CD8-positive, alpha-beta T cell (primary cell): ENCODE measurements at regions of chr20 and their contacts with region 1.

Region 1: GRCh38 chr20:18412221-18412901 is 54.5 kb downstream of the DZANK1 start:
- DNase-seq: no peak
- ATAC-seq: no peak
- H3K4me3 ChIP-seq: no peak overlapping the region
- H3K4me3 Mint-ChIP-seq: no peak overlapping the region
- H3K27ac ChIP-seq: no peak overlapping the region
- H3K27ac Mint-ChIP-seq: no peak overlapping the region
- H3K4me1 ChIP-seq: no peaks in the 10 kb centered on the region
- H3K4me1 Mint-ChIP-seq: peaks cover 3% of the 10 kb centered on the region
- H3K27me3 ChIP-seq: no peaks in the 10 kb centered on the region
- H3K27me3 Mint-ChIP-seq: no peaks in the 10 kb centered on the region
- CTCF ChIP-seq: no peak

Region 2: GRCh38 chr20:18427214-18427613 is 14.9 kb after region 1 on chr20:
- CTCF ChIA-PET with region 1: no interaction called
- POLR2A ChIA-PET with region 1: no interaction called
- intact Hi-C with region 1: no loop called
- DNase-seq: no peak
- ATAC-seq: no peak
- H3K4me3 ChIP-seq: no peak overlapping the region
- H3K4me3 Mint-ChIP-seq: no peak overlapping the region
- H3K27ac ChIP-seq: no peak overlapping the region
- H3K27ac Mint-ChIP-seq: no peak overlapping the region
- H3K4me1 ChIP-seq: no peaks in the 10 kb centered on the region
- H3K4me1 Mint-ChIP-seq: no peaks in the 10 kb centered on the region
- H3K27me3 ChIP-seq: no peaks in the 10 kb centered on the region
- H3K27me3 Mint-ChIP-seq: no peaks in the 10 kb centered on the region
- CTCF ChIP-seq: no peak

Region 3: DNA sequence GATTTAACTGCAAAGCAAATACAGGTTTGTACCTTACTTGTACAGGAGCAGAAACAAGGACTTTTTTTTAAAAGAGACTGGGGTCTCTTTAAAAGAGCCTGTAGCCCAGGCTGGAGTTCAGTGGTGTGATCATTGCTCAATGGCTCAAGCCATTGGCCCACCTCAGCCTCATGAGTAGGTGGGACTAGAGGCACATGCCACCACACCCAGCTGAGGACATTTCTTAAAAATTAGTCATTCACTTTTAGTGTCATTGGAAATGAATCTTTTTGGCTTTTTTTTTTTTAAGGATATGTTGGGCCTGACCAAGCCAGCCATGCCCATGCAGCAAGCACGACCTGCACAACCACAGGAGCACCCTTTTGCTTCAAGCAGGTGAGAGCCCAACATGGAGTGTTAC is 112.3 kb after region 1 on chr20:
- CTCF ChIA-PET with region 1: no interaction called
- POLR2A ChIA-PET with region 1: no interaction called
- intact Hi-C with region 1: loop called in 1 of 2 experiments (anchors 5 kb)
- DNase-seq: no peak
- ATAC-seq: no peak
- H3K4me3 ChIP-seq: no peak overlapping the region
- H3K4me3 Mint-ChIP-seq: no peak overlapping the region
- H3K27ac ChIP-seq: no peak overlapping the region
- H3K27ac Mint-ChIP-seq: no peak overlapping the region
- H3K4me1 ChIP-seq: no peaks in the 10 kb centered on the region
- H3K4me1 Mint-ChIP-seq: no peaks in the 10 kb centered on the region
- H3K27me3 ChIP-seq: no peaks in the 10 kb centered on the region
- H3K27me3 Mint-ChIP-seq: no peaks in the 10 kb centered on the region
- CTCF ChIP-seq: no peak

Region 4: DNA sequence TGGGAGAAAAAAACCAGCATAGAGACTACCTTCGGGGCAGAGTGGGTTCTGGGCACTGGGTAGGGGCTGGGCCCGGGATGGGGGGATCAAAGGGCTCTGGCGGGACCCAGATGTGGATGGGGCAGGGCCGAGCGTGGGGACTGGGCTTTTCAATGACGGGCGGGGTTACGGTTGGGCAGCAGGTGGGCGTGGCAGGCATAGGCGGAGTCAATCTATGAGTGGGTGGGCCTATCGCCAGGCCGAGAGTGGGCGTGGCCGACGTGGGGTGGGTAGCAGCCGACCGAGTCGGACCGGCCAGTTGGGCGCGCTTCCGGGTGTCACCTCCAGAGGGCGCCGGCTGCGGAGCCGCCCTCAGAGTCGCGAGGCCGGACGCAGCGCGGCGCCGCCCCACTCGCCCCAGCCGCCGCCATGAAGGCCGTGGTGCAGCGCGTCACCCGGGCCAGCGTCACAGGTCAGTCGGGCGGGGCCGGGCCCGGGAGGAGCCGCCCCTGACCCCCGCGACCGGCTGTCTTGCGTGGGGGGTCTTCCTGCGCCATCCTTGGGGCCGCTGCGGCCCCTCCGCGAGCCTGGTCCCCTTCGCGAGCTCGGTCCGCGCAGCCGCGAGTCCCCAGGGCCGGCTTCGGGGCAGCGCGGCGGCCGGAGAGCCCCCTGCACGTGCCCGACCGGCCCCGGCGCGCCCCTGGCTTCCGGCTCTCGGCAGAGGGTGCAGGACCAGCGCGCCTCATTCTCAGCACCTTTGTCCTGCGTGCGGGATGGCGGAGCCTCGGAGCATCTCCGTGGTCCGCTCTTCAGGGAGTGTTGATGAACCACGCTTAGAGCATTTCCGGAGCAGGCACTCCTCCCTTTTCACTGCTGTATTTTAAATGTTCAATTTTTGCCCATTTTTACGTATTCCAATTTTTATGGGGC is 175.6 kb after region 1 on chr20 and contains the start of gene DTD1:
- CTCF ChIA-PET with region 1: no interaction called
- POLR2A ChIA-PET with region 1: no interaction called
- intact Hi-C with region 1: loop called in 1 of 2 experiments (anchors 10 kb)
- DNase-seq: peak; percentile 53 to 89 (median 82)
- ATAC-seq: peak; percentile 82
- H3K4me3 ChIP-seq: peak within 1 kb of the TSS; percentile 65 to 83
- H3K4me3 Mint-ChIP-seq: peak within 1 kb of the TSS; percentile 95
- H3K27ac ChIP-seq: peak within 1 kb of the TSS; percentile 56 to 83
- H3K27ac Mint-ChIP-seq: peak within 1 kb of the TSS; percentile 94
- H3K4me1 ChIP-seq: peaks cover 18% of the 10 kb centered on the region
- H3K4me1 Mint-ChIP-seq: peaks cover 32% of the 10 kb centered on the region
- H3K27me3 ChIP-seq: no peaks in the 10 kb centered on the region
- H3K27me3 Mint-ChIP-seq: peaks cover 6% of the 10 kb centered on the region
- CTCF ChIP-seq: peak; percentile 45
- total RNA-seq, gene DTD1: 12.5 to 14.5 TPM

Region 5: DNA sequence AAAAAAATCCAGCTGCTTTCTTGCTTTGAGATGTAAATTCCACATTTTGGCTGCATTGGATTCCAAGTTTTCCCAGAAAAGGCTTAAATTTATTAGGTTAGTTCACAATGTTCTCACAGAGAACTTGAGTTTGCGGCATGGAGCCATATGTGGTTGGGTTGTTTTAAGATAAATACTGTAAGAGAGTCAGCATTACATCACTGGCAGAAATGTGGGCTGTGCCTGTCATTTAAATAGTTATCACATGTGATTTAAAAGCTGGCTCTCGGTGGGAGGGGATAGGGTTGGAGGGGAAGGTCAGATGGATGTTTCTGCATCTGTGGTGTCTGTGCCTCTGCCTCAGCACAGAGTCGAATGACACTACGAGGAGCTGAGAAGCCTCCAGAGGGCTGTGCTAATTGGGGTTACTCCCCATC is 327.4 kb after region 1 on chr20:
- CTCF ChIA-PET with region 1: no interaction called
- POLR2A ChIA-PET with region 1: no interaction called
- intact Hi-C with region 1: no loop called
- DNase-seq: peak in 1 of 9 experiments; percentile 37
- ATAC-seq: no peak
- H3K4me3 ChIP-seq: no peak overlapping the region
- H3K4me3 Mint-ChIP-seq: no peak overlapping the region
- H3K27ac ChIP-seq: no peak overlapping the region
- H3K27ac Mint-ChIP-seq: peak overlapping the region; percentile 32
- H3K4me1 ChIP-seq: peaks cover 5% of the 10 kb centered on the region
- H3K4me1 Mint-ChIP-seq: peaks cover 29% of the 10 kb centered on the region
- H3K27me3 ChIP-seq: no peaks in the 10 kb centered on the region
- H3K27me3 Mint-ChIP-seq: no peaks in the 10 kb centered on the region
- CTCF ChIP-seq: no peak

Region 6: DNA sequence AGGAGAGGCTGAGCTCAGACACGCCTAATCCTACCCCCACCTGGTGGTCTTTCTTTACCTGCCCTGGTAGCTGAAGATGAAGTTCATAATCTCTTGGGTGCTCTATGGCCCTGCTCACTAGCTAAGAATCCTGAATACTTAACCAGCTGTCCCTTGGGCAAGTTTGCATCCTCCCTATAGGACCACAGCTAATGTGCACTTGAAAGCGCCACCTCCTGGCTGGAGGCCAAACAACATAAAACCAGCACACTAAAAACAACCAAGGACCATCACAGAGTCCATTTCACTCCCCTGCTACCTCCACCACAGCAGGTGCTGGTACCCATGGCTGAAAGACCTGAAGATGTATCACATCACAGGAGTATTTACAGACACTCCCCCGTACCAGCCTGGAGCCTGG is 644.5 kb after region 1 on chr20:
- CTCF ChIA-PET with region 1: no interaction called
- POLR2A ChIA-PET with region 1: no interaction called
- intact Hi-C with region 1: loop called in 1 of 2 experiments (anchors 2 kb)
- DNase-seq: peak in 1 of 9 experiments; percentile 8
- ATAC-seq: no peak
- H3K4me3 ChIP-seq: no peak overlapping the region
- H3K4me3 Mint-ChIP-seq: no peak overlapping the region
- H3K27ac ChIP-seq: no peak overlapping the region
- H3K27ac Mint-ChIP-seq: no peak overlapping the region
- H3K4me1 ChIP-seq: no peaks in the 10 kb centered on the region
- H3K4me1 Mint-ChIP-seq: no peaks in the 10 kb centered on the region
- H3K27me3 ChIP-seq: no peaks in the 10 kb centered on the region
- H3K27me3 Mint-ChIP-seq: peaks cover 7% of the 10 kb centered on the region
- CTCF ChIP-seq: no peak

Region 7: GRCh38 chr20:19661717-19662636 is 1249.6 kb after region 1 on chr20:
- CTCF ChIA-PET with region 1: interaction called, 3 read pairs
- POLR2A ChIA-PET with region 1: no interaction called
- intact Hi-C with region 1: loop called (anchors 2 to 5 kb)
- DNase-seq: peak in 6 of 9 experiments; percentile 8 to 59 (median 48)
- ATAC-seq: no peak
- H3K4me3 ChIP-seq: no peak overlapping the region
- H3K4me3 Mint-ChIP-seq: no peak overlapping the region
- H3K27ac ChIP-seq: no peak overlapping the region
- H3K27ac Mint-ChIP-seq: no peak overlapping the region
- H3K4me1 ChIP-seq: no peaks in the 10 kb centered on the region
- H3K4me1 Mint-ChIP-seq: no peaks in the 10 kb centered on the region
- H3K27me3 ChIP-seq: no peaks in the 10 kb centered on the region
- H3K27me3 Mint-ChIP-seq: peaks cover 26% of the 10 kb centered on the region
- CTCF ChIP-seq: peak; percentile 92

Region 8: DNA sequence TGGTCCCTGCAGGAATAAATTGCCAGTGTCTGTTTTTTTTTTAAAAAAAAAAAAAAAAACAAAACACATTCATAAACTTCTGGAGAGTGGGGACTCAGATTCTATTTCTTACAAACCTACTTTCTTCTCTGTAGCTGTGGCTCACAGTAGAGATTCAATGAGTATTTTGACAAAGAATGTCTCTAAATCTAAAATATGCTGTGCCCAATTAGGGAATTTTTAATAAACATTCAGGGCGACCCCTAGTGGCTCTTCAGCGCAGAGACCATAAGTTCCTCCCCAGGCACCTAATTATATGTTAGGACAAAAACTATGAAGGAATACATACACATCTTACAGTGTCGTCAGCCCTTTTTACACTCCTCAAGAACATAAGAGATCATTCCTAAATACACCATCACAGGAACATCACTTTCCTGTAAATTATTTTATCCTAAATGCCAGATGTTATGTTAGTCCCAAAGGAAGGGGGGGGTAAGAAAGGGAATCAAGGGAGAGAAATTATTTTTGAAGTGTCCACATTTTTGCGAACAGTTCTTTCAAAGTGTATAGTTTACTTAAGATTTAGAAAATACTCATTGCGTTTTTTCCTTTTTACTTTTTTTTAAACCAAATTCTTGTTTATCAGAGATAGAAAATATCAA is 1583.0 kb after region 1 on chr20:
- CTCF ChIA-PET with region 1: no interaction called
- POLR2A ChIA-PET with region 1: no interaction called
- intact Hi-C with region 1: loop called in 1 of 2 experiments (anchors 5 kb)
- DNase-seq: peak in 4 of 9 experiments; percentile 18 to 63 (median 38)
- ATAC-seq: no peak
- H3K4me3 ChIP-seq: no peak overlapping the region
- H3K4me3 Mint-ChIP-seq: no peak overlapping the region
- H3K27ac ChIP-seq: no peak overlapping the region
- H3K27ac Mint-ChIP-seq: no peak overlapping the region
- H3K4me1 ChIP-seq: no peaks in the 10 kb centered on the region
- H3K4me1 Mint-ChIP-seq: no peaks in the 10 kb centered on the region
- H3K27me3 ChIP-seq: no peaks in the 10 kb centered on the region
- H3K27me3 Mint-ChIP-seq: peaks cover 19% of the 10 kb centered on the region
- CTCF ChIP-seq: peak; percentile 69